PC-3 (cell line): ENCODE measurements at regions of chr12 and their contacts with region 1.

Region 1: DNA sequence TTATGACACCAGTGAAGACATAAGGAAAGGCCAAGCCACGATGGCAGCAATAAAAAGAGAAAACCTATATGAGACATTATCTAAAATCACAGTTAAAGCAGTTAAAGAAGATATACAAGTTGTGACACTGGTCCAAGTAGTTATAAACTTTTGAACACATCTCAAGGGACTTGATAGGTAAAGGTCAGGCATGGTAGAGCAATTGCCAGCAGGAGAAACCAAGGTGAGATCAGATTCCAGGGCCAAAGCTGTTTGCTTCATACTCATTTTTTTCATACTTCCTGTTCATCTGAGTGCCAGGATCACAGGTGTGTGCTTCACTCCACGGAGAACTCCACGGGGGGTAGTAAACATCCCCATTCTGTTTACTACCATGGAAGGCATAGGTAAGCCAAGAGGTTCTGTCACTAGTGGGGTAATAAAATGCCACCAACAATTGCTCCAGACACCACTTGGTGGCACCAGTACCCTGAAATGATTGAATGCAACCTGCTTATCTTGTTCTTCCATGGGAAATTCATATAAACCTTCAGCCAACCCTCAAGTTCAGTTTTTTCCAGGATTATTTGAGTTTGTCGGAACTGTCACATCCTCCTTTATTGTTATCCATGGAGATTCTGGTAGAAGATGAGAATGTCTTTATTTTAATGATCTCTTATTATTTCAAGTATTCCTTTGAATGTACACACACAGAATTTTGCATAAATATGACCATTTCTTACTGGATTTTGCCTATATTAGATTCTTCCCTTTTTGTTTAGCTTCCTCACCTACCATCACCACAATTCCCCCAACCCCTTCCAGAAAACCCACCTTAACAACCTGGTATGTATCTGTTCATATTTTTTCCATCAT is 59.2 kb upstream of the TSPAN8 start:
- DNase-seq: peak; percentile 82
- ATAC-seq: peak; percentile 81
- H3K4me3 ChIP-seq: no peak overlapping the region
- H3K27ac ChIP-seq: no peak overlapping the region
- H3K4me1 ChIP-seq: no peaks in the 10 kb centered on the region
- H3K27me3 ChIP-seq: no peaks in the 10 kb centered on the region
- CTCF ChIP-seq: peak; percentile 85

Region 2: DNA sequence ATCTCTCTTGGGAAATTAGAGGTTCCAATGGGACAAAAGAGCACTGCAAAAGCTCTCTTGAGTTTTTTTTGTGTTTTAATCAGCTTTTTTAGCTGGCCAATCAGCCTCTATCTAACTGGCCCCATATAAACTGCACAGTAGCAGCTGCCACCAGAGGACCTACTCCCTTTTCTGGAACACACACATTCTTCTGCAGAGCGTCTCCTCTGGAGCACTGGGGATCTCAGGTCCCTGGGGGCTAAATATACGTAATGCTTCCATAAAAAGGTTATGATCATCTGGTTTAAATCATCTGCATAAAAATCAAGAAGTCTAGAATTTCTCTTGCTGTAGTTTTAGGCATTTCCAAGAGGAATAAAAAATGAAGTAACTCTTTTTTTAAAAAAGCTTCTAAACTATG is 91.4 kb before region 1 on chr12:
- CTCF ChIA-PET with region 1: no interaction called
- POLR2A ChIA-PET with region 1: no interaction called
- intact Hi-C with region 1: loop called (anchors 2 kb)
- DNase-seq: peak; percentile 11
- ATAC-seq: peak; percentile 59
- H3K4me3 ChIP-seq: no peak overlapping the region
- H3K27ac ChIP-seq: no peak overlapping the region
- H3K4me1 ChIP-seq: no peaks in the 10 kb centered on the region
- H3K27me3 ChIP-seq: no peaks in the 10 kb centered on the region
- CTCF ChIP-seq: 0 out of 2 replicates have a peak, but pooled peaks have one; percentile 27

Region 3: GRCh38 chr12:71157601-71158233 is 59.2 kb before region 1 on chr12 and contains the start of gene TSPAN8:
- CTCF ChIA-PET with region 1: no interaction called
- POLR2A ChIA-PET with region 1: no interaction called
- intact Hi-C with region 1: loop called (anchors 2 kb)
- DNase-seq: peak; percentile 83
- ATAC-seq: peak; percentile 66
- H3K4me3 ChIP-seq: peak within 1 kb of the TSS; percentile 44
- H3K27ac ChIP-seq: peak within 1 kb of the TSS; percentile 70
- H3K4me1 ChIP-seq: peaks cover 66% of the 10 kb centered on the region
- H3K27me3 ChIP-seq: no peaks in the 10 kb centered on the region
- CTCF ChIP-seq: no peak
- total RNA-seq, gene TSPAN8: 1.3 TPM in 1 of 2 replicates, not detected in the other

Region 4: GRCh38 chr12:71371122-71371521 is 154.2 kb after region 1 on chr12:
- CTCF ChIA-PET with region 1: interaction called, 3 read pairs
- POLR2A ChIA-PET with region 1: no interaction called
- intact Hi-C with region 1: loop called (anchors 2 kb)
- DNase-seq: peak; percentile 47
- ATAC-seq: peak; percentile 74
- H3K4me3 ChIP-seq: no peak overlapping the region
- H3K27ac ChIP-seq: no peak overlapping the region
- H3K4me1 ChIP-seq: no peaks in the 10 kb centered on the region
- H3K27me3 ChIP-seq: no peaks in the 10 kb centered on the region
- CTCF ChIP-seq: peak; percentile 62

Region 5: DNA sequence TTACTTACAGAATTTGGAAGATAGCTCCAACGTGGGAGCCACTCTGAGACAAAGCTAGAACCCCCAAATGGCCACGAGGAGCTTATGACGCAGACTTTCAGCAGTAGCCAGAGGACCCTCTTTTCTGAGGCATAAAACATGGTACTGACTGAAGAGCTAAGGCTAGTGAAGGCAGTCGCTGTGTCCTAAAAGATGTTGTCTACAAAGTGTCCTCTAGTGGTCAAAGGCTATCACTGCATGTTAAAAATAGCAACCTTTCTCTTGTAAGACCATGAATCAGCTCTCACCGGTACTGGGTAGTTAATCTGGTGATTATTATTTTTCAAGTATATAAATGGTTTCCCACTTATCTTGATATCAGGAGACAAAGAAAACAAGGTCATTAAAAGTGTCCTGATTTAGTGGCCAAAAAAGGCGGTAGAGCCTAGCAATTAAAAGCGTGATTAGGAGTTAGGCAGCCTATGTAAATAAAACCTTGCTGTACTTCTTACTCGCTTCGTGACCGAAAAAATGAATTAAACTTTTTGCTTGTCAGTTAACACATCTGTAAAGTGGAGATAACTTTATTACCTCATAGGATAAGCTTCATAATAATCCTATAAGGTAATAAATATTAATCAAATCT is 175.7 kb after region 1 on chr12:
- CTCF ChIA-PET with region 1: interaction called, 4 read pairs
- POLR2A ChIA-PET with region 1: no interaction called
- intact Hi-C with region 1: loop called (anchors 1 kb)
- DNase-seq: peak; percentile 84
- ATAC-seq: peak; percentile 84
- H3K4me3 ChIP-seq: no peak overlapping the region
- H3K27ac ChIP-seq: no peak overlapping the region
- H3K4me1 ChIP-seq: peaks cover 14% of the 10 kb centered on the region
- H3K27me3 ChIP-seq: no peaks in the 10 kb centered on the region
- CTCF ChIP-seq: peak; percentile 87

Region 6: DNA sequence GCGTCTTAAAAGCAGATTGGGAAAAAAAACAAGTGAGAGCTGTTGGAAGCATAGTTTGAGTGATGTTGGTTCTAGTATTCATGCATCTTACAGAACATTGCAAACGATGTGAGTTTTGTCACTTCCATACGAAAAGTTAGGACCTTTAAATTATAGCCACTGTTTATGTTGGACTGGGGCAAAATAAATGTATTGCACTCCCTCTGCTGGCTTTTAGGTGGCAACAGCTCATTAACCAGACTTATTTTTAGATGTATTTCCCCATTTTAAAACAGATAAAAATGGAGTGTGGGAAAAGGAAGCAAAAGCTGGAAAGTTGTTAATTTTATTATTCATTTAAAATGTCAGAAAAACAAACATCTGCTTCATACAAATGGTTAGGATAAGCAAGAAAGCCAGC is 334.6 kb after region 1 on chr12:
- CTCF ChIA-PET with region 1: no interaction called
- POLR2A ChIA-PET with region 1: no interaction called
- intact Hi-C with region 1: loop called (anchors 1 kb)
- DNase-seq: peak; percentile 44
- ATAC-seq: peak; percentile 45
- H3K4me3 ChIP-seq: no peak overlapping the region
- H3K27ac ChIP-seq: no peak overlapping the region
- H3K4me1 ChIP-seq: no peaks in the 10 kb centered on the region
- H3K27me3 ChIP-seq: no peaks in the 10 kb centered on the region
- CTCF ChIP-seq: peak; percentile 74

Region 7: DNA sequence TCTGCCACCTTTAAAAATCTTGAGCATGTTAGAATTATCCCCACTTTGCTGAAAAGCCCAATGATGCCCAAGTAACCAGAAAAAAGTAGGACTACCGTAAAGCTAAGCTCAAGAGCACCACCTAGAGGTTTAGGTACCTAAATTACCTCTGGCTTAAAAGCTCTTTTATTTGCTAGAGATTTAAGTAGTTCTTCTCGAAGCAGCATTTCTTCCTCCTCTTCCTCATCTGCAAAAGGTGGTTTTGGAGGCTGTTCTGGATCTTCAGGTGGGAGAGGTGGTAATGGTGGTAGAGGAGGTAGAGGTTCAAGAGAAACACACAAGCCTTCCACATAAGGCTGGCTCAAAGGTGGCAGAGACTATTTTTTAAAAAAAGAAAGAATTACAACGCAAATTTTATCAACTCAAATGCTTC is 419.8 kb after region 1 on chr12:
- CTCF ChIA-PET with region 1: no interaction called
- POLR2A ChIA-PET with region 1: no interaction called
- intact Hi-C with region 1: loop called (anchors 10 kb)
- DNase-seq: peak; percentile 84
- ATAC-seq: peak; percentile 48; the same call in 1 of the 2 replicates
- H3K4me3 ChIP-seq: no peak overlapping the region
- H3K27ac ChIP-seq: no peak overlapping the region
- H3K4me1 ChIP-seq: no peaks in the 10 kb centered on the region
- H3K27me3 ChIP-seq: no peaks in the 10 kb centered on the region
- CTCF ChIP-seq: peak; percentile 87